ENCODE measurements at regions of chr3 and their contacts with region 1.

Region 1: DNA sequence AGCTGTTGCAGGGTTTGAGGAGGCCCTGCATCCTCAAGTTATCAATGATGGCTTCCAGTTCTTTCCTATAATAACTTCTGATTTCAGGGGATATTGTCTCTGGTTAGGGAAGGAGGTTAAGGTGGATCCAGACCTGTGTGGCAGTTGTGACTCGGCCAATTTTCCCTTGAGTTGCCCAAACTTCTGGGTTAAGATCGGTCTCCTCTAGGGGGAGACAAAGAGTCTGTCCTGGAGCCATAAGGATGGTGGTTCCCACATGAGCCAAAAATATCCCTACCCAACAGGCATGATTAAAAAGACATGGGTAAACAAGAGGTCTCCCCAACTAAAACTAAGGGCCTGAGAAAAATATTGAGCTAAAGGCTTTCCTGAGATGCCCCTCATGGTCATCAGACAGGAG is 227.5 kb upstream of the MDFIC2 start:
- DNase-seq: no peak
- ATAC-seq: no peak
- H3K4me3 ChIP-seq: no peak overlapping the region
- H3K27ac ChIP-seq: no peak overlapping the region
- H3K4me1 ChIP-seq: no peaks in the 10 kb centered on the region
- H3K27me3 ChIP-seq: no peaks in the 10 kb centered on the region
- CTCF ChIP-seq: no peak

Region 2: DNA sequence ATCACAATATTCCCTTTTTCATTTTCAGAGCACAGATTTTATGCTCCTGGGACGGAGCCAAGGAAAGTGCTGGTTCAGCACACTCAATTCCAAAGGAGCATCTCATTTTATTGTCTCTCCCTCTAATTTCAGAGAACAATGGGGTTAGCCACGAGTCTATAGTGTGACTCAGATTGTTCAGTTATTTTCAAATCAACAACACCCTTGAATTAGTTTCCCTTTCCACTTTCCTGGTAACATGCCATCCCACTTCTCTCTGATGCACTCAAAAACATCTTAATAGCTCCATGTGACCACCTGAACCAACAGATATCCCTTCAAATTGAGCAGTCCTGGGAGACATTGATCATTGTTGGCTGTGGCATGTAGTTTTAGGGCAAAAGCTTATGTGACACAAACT is 162.2 kb after region 1 on chr3:
- intact Hi-C with region 1: loop called in 1 of 2 experiments (anchors 10 kb)
- DNase-seq: no peak
- ATAC-seq: no peak
- H3K4me3 ChIP-seq: no peak overlapping the region
- H3K27ac ChIP-seq: no peak overlapping the region
- H3K4me1 ChIP-seq: no peaks in the 10 kb centered on the region
- H3K27me3 ChIP-seq: no peaks in the 10 kb centered on the region
- CTCF ChIP-seq: no peak

Region 3: GRCh38 chr3:71599416-71599815 is 1059.5 kb after region 1 on chr3:
- intact Hi-C with region 1: loop called in 1 of 2 experiments (anchors 10 kb)
- DNase-seq: no peak
- ATAC-seq: no peak
- H3K4me3 ChIP-seq: no peak overlapping the region
- H3K27ac ChIP-seq: peak overlapping the region in 1 of 2 donors; percentile 16
- H3K4me1 ChIP-seq: no peaks in the 10 kb centered on the region
- H3K27me3 ChIP-seq: no peaks in the 10 kb centered on the region
- CTCF ChIP-seq: no peak